IMR-90 (cell line): ENCODE measurements at regions of chr5 and their contacts with region 1.

Region 1: DNA sequence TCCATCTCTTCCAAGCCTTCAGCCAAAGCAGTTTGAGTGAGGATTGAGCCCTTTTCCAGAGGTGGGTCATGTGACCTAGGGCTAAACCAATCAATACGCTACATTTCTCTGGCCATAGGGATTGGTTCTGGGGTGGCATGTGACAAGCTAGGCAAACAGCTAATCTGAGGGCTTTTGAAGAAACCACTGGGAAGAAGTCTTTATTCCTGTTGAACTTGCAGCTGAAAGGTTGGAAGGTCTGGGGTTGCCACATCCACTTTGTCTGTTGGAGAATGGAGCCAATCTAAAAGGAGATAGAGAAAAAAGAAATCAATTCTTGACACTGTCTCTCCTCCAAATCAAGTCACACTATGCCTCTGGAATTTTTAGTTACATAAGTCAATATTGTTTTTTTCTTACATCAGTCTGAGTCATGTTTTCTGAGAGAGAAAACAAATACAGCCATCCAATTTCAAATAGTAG is 637.8 kb upstream of the WWC1 start:
- DNase-seq: peak; percentile 30
- ATAC-seq: no peak; the same call in 1 of the 2 replicates
- H3K4me3 ChIP-seq: no peak overlapping the region
- H3K27ac ChIP-seq: no peak overlapping the region
- H3K4me1 ChIP-seq: peaks cover 5% of the 10 kb centered on the region
- H3K27me3 ChIP-seq: no peaks in the 10 kb centered on the region
- CTCF ChIP-seq: no peak
- POLR2A ChIP-seq: no peak
- RAD21 ChIP-seq: no peak

Region 2: GRCh38 chr5:167699434-167699833 is 45.8 kb after region 1 on chr5:
- CTCF ChIA-PET with region 1: no interaction called
- POLR2A ChIA-PET with region 1: interaction called, 11 read pairs
- dilution Hi-C with region 1: no loop called
- in situ Hi-C with region 1: no loop called
- intact Hi-C with region 1: no loop called
- DNase-seq: peak; percentile 99
- ATAC-seq: peak; percentile 96
- H3K4me3 ChIP-seq: no peak overlapping the region
- H3K27ac ChIP-seq: no peak overlapping the region
- H3K4me1 ChIP-seq: peaks cover 9% of the 10 kb centered on the region
- H3K27me3 ChIP-seq: no peaks in the 10 kb centered on the region
- CTCF ChIP-seq: no peak; the same call in 1 of the 2 replicates
- POLR2A ChIP-seq: no peak
- RAD21 ChIP-seq: no peak

Region 3: DNA sequence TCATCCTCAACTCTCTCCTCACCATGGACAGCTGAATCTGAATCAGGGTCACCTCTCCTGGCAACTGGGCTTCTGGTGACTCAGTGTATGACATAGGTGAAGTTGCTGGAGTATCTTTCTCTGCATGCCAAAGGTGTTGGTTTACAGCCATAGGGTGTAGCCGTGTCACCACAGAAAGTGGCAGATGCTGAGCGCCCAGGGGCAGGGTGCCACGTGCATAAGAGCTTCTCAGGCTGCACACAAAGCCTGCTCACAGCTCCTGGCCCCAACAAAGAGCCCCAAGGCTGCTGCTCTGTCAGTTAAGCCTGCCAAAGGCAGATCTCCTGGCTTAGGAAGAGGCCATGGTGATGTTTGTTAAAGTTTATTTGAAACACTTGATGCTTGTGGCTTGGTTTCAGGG is 340.1 kb after region 1 on chr5:
- CTCF ChIA-PET with region 1: no interaction called
- POLR2A ChIA-PET with region 1: no interaction called
- dilution Hi-C with region 1: no loop called
- in situ Hi-C with region 1: no loop called
- intact Hi-C with region 1: no loop called
- DNase-seq: no peak
- ATAC-seq: no peak
- H3K4me3 ChIP-seq: no peak overlapping the region
- H3K27ac ChIP-seq: no peak overlapping the region
- H3K4me1 ChIP-seq: no peaks in the 10 kb centered on the region
- H3K27me3 ChIP-seq: peaks cover 2% of the 10 kb centered on the region; the same call in 1 of the 2 replicates
- CTCF ChIP-seq: no peak
- POLR2A ChIP-seq: no peak
- RAD21 ChIP-seq: no peak